GM10248 (cell line): ENCODE measurements at regions of chr16 and their contacts with region 1.

Region 1: GRCh38 chr16:72285728-72286127 is 113.8 kb upstream of the PMFBP1 start:
- DNase-seq: no peak
- CTCF ChIP-seq: no peak

Region 2: GRCh38 chr16:72221630-72222024 is 64.1 kb before region 1 on chr16:
- CTCF ChIA-PET with region 1: no interaction called
- POLR2A ChIA-PET with region 1: no interaction called
- DNase-seq: no peak
- CTCF ChIP-seq: no peak

Region 3: GRCh38 chr16:72270531-72270930 is 15.2 kb before region 1 on chr16:
- CTCF ChIA-PET with region 1: interaction called, 36 read pairs
- POLR2A ChIA-PET with region 1: no interaction called
- DNase-seq: no peak
- CTCF ChIP-seq: no peak